Calu3 (cell line): ENCODE measurements at regions of chr10 and their contacts with region 1.

Region 1: GRCh38 chr10:59234816-59235429 is 58.5 kb downstream of the PHYHIPL start:
- DNase-seq: peak; percentile 54
- H3K4me3 Mint-ChIP-seq: no peak overlapping the region
- H3K27ac Mint-ChIP-seq: no peak overlapping the region
- H3K4me1 Mint-ChIP-seq: no peaks in the 10 kb centered on the region
- H3K27me3 Mint-ChIP-seq: no peaks in the 10 kb centered on the region
- CTCF ChIP-seq: peak; percentile 40

Region 2: DNA sequence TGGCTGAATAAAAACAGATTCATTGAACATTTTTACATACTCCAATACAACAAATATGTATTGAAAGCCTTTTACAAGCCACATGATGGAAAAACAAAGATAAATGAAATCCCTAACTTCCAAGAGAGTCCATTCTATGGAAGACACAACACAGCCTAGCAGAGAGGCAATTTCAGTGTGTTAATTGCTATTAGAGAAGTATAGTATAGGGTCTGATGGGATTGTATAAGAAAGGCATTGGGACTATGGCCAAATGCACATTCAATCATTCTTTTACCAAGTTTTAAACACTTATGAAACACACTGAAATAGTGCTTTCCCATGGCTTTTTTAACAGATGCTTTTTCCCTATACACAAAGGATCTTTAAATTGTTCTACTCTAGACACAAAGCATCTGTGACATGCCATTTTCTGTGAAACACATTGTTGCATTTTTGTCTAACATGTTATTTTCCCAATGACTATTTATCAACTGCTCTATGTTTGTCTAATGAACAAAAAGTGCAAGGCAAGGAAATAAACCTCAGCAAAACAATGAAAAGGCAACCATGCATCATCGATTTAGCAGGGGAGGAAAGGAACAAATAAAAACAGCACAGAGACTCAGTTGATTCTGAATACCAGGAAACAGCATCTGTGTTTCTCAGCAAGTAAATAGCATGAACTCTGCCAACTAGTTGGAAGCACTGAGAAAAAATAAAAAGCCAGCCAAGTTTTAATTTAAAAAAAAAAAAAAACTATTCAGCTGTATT is 100.9 kb before region 1 on chr10:
- CTCF ChIA-PET with region 1: no interaction called
- intact Hi-C with region 1: no loop called
- DNase-seq: no peak
- H3K4me3 Mint-ChIP-seq: no peak overlapping the region
- H3K27ac Mint-ChIP-seq: no peak overlapping the region
- H3K4me1 Mint-ChIP-seq: no peaks in the 10 kb centered on the region
- H3K27me3 Mint-ChIP-seq: peaks cover 25% of the 10 kb centered on the region
- CTCF ChIP-seq: no peak

Region 3: GRCh38 chr10:59808896-59809643 is 574.1 kb after region 1 on chr10:
- CTCF ChIA-PET with region 1: no interaction called
- intact Hi-C with region 1: loop called (anchors 5 kb)
- DNase-seq: peak; percentile 87
- H3K4me3 Mint-ChIP-seq: no peak overlapping the region
- H3K27ac Mint-ChIP-seq: no peak overlapping the region
- H3K4me1 Mint-ChIP-seq: no peaks in the 10 kb centered on the region
- H3K27me3 Mint-ChIP-seq: no peaks in the 10 kb centered on the region
- CTCF ChIP-seq: peak; percentile 81